ENCODE measurements at regions of chr5 and their contacts with region 1.

Region 1: GRCh38 chr5:39412721-39413394 is 11.9 kb downstream of the DAB2 start:
- H3K4me3 ChIP-seq: no peak overlapping the region
- H3K27ac ChIP-seq: no peak overlapping the region
- H3K4me1 ChIP-seq: 0 out of 2 replicates have a peak, but pooled peaks cover 3% of the 10 kb centered on the region
- CTCF ChIP-seq: no peak

Region 2: DNA sequence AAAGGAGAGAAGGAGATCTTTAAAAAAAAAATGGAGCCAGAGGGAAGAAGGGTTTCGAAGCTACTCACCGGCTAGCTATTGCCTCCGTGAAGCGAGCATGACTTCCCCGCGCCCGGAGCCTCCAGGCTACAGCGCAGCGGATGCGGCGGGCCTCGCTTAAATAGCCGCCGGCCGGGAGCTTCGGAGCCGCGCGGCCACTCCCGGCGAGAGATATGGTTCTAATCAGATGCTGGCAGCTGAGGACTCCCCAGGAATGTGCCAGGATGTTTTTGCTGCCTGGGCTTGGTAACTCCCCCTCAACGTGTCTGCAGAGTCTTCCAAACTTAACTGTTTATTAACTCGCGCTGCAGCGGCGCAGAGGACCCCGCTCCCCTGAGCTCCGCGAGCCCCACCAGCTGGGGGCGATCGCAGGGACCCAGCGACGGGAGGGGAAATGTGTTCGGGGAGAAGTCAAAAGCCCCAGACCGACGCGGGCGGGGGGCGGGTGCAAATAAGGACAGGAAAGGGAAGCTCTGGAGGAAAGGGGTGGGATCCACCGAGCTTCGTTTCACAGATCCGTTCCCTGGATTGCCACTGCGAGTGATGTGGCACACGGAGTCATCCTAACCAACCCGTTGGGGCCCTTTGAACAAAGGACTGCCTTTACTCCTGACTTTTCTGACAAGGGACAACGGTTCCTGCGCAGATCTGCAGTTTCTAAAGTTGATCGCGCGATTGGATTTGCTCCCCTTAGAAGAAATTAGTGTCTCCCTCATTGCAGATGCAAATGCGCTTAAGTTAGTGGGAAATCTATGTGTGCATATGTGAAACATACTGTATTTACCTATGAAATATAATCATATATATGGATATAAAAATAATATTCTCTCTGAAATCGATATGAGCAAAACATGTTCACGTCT is 12.1 kb after region 1 on chr5 and contains the start of gene DAB2:
- CTCF ChIA-PET with region 1: interaction called, 10 read pairs
- POLR2A ChIA-PET with region 1: interaction called, 5 read pairs
- H3K4me3 ChIP-seq: peak within 1 kb of the TSS; percentile 64
- H3K27ac ChIP-seq: peak within 1 kb of the TSS; percentile 74
- H3K4me1 ChIP-seq: peaks cover 9% of the 10 kb centered on the region; the same call in 1 of the 2 replicates
- CTCF ChIP-seq: peak; percentile 97

Region 3: GRCh38 chr5:39442973-39443372 is 30.1 kb after region 1 on chr5:
- CTCF ChIA-PET with region 1: no interaction called
- POLR2A ChIA-PET with region 1: no interaction called
- H3K4me3 ChIP-seq: no peak overlapping the region
- H3K27ac ChIP-seq: no peak overlapping the region
- H3K4me1 ChIP-seq: no peaks in the 10 kb centered on the region
- CTCF ChIP-seq: no peak